GM10248 (cell line): ENCODE measurements at regions of chr19 and their contacts with region 1.

Region 1: DNA sequence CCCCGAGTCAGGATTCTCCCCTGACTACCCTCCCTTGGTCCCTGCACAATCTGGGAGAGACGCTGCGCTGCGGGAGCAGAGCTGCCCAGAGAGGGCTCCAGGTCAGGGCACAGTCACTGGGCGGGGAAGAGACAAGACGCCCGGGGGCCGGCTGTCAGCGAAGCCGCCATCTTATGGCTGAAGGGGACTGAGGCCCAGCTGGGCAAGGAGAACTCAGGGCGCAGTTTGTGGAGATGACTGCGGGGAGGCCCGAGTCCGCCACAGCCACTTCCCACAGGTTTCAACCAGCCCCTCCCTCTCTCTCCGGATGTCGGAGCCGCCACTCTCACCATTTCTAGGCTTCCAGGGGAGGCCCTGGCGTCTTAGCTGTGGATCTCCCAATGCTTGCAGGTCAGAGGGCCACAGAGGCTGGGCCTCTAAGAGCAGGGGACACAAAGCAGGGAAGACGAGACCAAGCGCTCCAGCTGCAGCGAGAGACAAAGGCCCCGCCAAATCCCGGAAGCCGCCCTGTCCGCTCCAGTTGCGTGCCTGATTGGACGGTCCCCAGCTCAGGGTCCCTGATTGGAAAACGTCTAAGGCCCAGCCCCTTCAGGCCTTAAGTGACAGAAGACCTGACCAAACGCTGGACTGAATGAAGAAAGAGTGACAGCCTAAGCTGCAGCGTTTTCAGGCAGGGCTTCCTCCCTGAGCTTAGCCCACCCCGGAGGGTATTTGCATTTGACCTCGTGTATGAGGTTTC is at the start of gene ZNF724:
- DNase-seq: peak; percentile 94
- CTCF ChIP-seq: no peak

Region 2: DNA sequence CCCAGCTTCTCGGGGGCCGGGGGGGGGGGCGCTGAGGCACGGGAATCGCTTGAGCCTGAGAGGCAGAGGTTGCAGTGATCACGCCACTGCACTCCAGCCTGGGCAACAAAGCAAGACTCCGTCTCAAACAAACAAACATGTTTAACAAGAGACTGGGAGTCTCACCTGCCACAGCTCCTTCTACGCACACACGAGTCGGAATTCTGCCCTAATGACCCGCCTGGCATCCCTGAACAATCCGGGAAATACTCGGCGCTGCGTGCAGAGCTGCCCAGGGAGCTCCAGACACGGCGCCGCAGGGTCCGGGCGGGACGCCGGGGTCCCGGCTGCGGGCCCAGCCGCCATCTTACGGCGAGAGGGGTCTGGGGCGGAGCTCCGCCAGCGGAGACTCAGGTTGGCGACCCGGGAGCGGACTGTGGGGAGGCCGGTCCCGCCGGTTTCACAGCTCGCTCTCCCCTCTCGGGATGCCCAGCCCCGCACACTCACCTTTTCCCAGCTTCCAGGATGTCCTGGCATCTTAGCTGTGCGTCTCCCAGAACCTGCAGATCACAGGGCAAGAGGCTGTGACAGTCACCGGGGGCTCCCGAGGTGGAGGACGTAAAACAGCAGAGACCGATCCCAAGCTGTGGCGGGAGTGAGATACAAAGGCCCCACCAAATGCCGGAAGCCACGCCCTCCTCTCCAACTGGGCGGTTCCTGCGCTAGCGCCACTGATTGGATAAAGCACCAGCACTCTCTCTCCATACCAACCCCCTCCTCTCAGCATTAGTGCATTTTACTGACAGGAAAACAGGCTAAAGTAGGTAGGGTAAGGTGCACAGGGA is 23.7 kb after region 1 on chr19:
- CTCF ChIA-PET with region 1: interaction called, 5 read pairs
- POLR2A ChIA-PET with region 1: interaction called, 17 read pairs
- DNase-seq: peak; percentile 91
- CTCF ChIP-seq: peak; percentile 35